ENCODE measurements at regions of chr7 and their contacts with region 1.

Region 1: GRCh38 chr7:50266635-50267386 is 37.7 kb upstream of the IKZF1 start:
- DNase-seq: peak; percentile 93
- ATAC-seq: peak; percentile 59
- H3K4me3 Mint-ChIP-seq: peak overlapping the region; percentile 65
- H3K27ac Mint-ChIP-seq: peak overlapping the region; percentile 98
- H3K4me1 Mint-ChIP-seq: peaks cover 93% of the 10 kb centered on the region
- H3K27me3 Mint-ChIP-seq: no peaks in the 10 kb centered on the region

Region 2: GRCh38 chr7:50068026-50068425 is 198.8 kb before region 1 on chr7:
- CTCF ChIA-PET with region 1: no interaction called
- DNase-seq: no peak
- ATAC-seq: no peak
- H3K4me3 Mint-ChIP-seq: no peak overlapping the region
- H3K27ac Mint-ChIP-seq: no peak overlapping the region
- H3K4me1 Mint-ChIP-seq: peaks cover 13% of the 10 kb centered on the region
- H3K27me3 Mint-ChIP-seq: peaks cover 4% of the 10 kb centered on the region

Region 3: DNA sequence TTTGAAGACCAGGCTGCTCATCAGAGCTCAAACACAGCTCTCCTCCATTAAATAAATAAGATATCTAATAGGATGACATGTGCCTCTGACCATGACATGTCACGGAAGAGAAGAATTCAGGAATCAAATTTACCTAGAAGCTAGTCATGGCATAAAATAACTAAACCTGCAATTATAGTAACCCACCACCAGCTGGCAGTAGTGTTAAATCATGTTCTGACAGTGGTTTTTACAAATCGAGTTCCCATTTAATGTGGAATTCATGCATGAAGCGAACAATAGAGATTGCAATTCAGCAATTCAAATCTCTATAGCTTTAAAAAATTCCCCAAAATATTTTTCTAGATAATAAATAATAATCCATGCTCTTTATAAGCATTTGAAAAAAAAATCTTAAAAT is 36.8 kb before region 1 on chr7:
- CTCF ChIA-PET with region 1: interaction called, 18 read pairs
- DNase-seq: no peak
- ATAC-seq: no peak
- H3K4me3 Mint-ChIP-seq: no peak overlapping the region
- H3K27ac Mint-ChIP-seq: no peak overlapping the region
- H3K4me1 Mint-ChIP-seq: peaks cover 40% of the 10 kb centered on the region
- H3K27me3 Mint-ChIP-seq: no peaks in the 10 kb centered on the region

Region 4: GRCh38 chr7:50251765-50252164 is 15.0 kb before region 1 on chr7:
- CTCF ChIA-PET with region 1: interaction called, 10 read pairs
- DNase-seq: no peak
- ATAC-seq: no peak
- H3K4me3 Mint-ChIP-seq: no peak overlapping the region
- H3K27ac Mint-ChIP-seq: no peak overlapping the region
- H3K4me1 Mint-ChIP-seq: peaks cover 2% of the 10 kb centered on the region
- H3K27me3 Mint-ChIP-seq: no peaks in the 10 kb centered on the region

Region 5: DNA sequence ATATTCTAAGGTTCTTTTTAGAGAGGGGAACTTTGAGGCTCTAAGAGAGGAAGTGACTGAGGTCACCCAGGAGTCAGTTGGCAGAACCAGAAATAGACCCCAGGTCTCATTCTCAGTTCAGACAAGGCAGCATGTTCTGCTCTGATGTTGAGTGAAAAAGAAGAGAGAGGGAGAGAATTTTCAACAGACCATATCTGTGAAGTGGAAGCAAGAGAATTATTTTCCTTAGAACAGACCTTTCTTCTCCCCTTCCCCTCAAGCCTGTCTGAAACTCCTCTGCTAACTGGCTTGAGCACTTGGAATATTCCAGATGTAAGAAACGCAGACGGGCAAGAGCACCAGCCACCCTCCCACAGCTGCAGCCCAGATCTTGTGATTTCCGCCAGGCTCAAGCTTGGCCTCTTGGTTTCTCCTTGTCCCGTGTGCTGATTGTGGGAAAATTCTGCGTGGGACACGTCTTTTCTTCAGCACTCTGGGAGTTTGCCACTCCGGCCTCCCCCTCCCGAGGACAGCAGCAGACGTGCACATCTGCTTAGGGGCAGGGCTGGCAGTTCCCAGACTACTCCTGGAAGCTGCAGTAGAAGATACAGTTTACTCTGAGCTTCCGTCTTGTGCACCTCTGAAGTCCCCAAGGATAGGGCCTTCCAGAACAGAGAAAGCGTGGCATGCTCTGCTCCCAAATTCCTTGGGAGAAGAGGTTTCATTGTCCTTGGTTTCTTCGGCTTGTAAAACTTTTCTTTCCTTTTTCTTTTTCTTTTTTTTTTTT is 15.1 kb after region 1 on chr7:
- CTCF ChIA-PET with region 1: interaction called, 22 read pairs
- DNase-seq: no peak
- ATAC-seq: peak; percentile 75
- H3K4me3 Mint-ChIP-seq: peak overlapping the region; percentile 33
- H3K27ac Mint-ChIP-seq: peak overlapping the region; percentile 72
- H3K4me1 Mint-ChIP-seq: peaks cover 45% of the 10 kb centered on the region
- H3K27me3 Mint-ChIP-seq: no peaks in the 10 kb centered on the region

Region 6: DNA sequence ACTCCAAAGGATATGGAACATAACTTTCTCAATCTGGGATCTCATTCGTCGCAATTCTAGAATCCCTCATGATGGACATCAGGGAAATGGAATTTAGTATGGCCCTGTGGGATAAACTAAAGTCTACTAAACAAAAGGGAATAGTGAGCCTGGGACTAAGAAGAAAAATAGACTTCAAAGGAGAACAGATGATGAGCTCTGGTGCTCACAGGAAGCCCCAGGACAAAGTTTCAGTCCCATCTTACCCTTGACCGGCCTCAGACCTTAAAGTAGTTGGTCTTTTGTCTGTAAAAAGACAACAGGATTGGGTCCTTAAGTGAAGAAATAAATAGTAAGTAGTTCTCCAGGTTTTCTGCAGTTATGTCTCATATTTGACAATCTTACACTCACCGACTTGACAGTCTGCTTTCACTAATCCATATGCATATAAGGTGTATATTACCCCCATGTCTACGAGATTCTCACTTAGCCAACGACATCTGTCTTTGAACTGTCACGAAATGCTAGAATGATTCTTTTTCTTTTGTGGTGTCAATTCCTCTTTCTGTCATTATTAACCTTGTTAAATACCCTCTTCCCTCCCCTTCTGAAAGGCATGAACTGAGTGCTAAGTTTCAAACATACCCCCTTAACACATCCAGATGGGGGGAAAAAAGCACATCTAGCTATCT is 26.8 kb after region 1 on chr7:
- CTCF ChIA-PET with region 1: interaction called, 18 read pairs
- DNase-seq: no peak
- ATAC-seq: no peak
- H3K4me3 Mint-ChIP-seq: no peak overlapping the region
- H3K27ac Mint-ChIP-seq: no peak overlapping the region
- H3K4me1 Mint-ChIP-seq: peaks cover 8% of the 10 kb centered on the region
- H3K27me3 Mint-ChIP-seq: peaks cover 9% of the 10 kb centered on the region

Region 7: GRCh38 chr7:50304158-50304910 is 37.5 kb after region 1 on chr7 and contains the start of gene IKZF1:
- CTCF ChIA-PET with region 1: interaction called, 48 read pairs
- DNase-seq: peak; percentile 71
- ATAC-seq: peak; percentile 40
- H3K4me3 Mint-ChIP-seq: peak within 1 kb of the TSS; percentile 91
- H3K27ac Mint-ChIP-seq: peak within 1 kb of the TSS; percentile 97
- H3K4me1 Mint-ChIP-seq: peaks cover 33% of the 10 kb centered on the region
- H3K27me3 Mint-ChIP-seq: no peaks in the 10 kb centered on the region
- total RNA-seq, gene IKZF1: 348 to 374 TPM

Region 8: GRCh38 chr7:50502001-50502684 is 235.3 kb after region 1 on chr7:
- CTCF ChIA-PET with region 1: no interaction called
- DNase-seq: no peak
- ATAC-seq: no peak
- H3K4me3 Mint-ChIP-seq: no peak overlapping the region
- H3K27ac Mint-ChIP-seq: no peak overlapping the region
- H3K4me1 Mint-ChIP-seq: peaks cover 2% of the 10 kb centered on the region
- H3K27me3 Mint-ChIP-seq: peaks cover 21% of the 10 kb centered on the region

Measured in activated CD8-positive, alpha-beta memory T cell treated with anti-CD3 and anti-CD28 coated beads, Interleukin-2, amount 10 ng/mL, durations not matched to agents 7 days and 5 days (primary cell).